Heart left ventricle (tissue), 16 donors: ENCODE measurements at regions of chr16 and their contacts with region 1.

Region 1: DNA sequence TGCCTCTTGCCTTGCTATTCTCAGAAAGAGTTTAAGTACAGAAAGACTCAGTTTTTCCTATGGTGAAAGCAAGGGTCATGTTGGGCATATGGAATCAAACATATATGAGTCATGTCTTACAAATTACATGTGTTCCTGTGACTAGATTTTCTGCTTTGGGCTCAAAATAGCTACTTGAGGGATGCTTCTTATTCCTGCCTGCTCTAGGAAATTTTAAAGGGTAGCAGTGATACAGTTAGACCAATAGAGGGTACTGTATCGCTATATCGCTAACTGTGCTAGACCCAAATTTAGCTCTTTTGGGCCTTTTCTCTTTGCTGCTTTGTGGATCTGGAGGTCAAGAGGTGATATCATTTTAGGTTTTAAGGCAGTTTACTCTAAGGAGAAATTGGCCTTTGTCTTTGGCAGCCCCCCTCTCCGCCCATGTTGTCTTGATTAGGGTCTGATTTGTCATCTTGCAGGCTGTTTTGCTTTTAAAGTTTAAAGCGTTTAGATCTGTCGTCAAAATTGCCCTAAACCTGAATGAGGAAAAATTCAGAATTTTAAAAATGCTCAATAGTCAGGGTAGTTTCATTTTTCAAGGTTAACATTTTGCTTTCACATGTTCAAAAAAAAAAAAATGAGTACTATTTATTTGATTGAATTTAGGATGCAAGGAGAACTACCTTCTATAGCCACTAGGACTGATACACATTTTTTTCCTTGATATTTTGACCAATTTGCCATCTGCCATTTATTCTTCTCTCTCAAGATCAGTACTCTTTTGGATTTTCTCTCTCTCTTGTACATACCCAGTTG is 8.8 kb downstream of the NFATC3 start:
- DNase-seq: no peak
- ATAC-seq: peak; percentile 56 to 73 (median 63)
- H3K4me3 ChIP-seq: no peak overlapping the region
- H3K27ac ChIP-seq: peak overlapping the region in 1 of 12 donors; percentile 13
- H3K4me1 ChIP-seq: peaks cover 0 to 71% (median 43%) of the 10 kb centered on the region in 12 donors
- H3K27me3 ChIP-seq: no peaks in the 10 kb centered on the region
- CTCF ChIP-seq: peak; percentile 12 to 64 (median 41)
- POLR2A ChIP-seq: no peak

Region 2: GRCh38 chr16:68031951-68032350 is 62.1 kb before region 1 on chr16:
- intact Hi-C with region 1: no loop called
- DNase-seq: no peak
- ATAC-seq: no peak
- H3K4me3 ChIP-seq: no peak overlapping the region
- H3K27ac ChIP-seq: no peak overlapping the region
- H3K4me1 ChIP-seq: no peaks in the 10 kb centered on the region
- H3K27me3 ChIP-seq: no peaks in the 10 kb centered on the region
- CTCF ChIP-seq: no peak
- POLR2A ChIP-seq: no peak

Region 3: GRCh38 chr16:68200088-68200783 is 106.2 kb after region 1 on chr16:
- intact Hi-C with region 1: loop called in 1 of 10 experiments (anchors 5 kb)
- DNase-seq: no peak
- ATAC-seq: no peak
- H3K4me3 ChIP-seq: no peak overlapping the region
- H3K27ac ChIP-seq: no peak overlapping the region
- H3K4me1 ChIP-seq: peaks cover 0 to 12% (median 2%) of the 10 kb centered on the region in 12 donors
- H3K27me3 ChIP-seq: no peaks in the 10 kb centered on the region
- CTCF ChIP-seq: no peak
- POLR2A ChIP-seq: no peak

Region 4: DNA sequence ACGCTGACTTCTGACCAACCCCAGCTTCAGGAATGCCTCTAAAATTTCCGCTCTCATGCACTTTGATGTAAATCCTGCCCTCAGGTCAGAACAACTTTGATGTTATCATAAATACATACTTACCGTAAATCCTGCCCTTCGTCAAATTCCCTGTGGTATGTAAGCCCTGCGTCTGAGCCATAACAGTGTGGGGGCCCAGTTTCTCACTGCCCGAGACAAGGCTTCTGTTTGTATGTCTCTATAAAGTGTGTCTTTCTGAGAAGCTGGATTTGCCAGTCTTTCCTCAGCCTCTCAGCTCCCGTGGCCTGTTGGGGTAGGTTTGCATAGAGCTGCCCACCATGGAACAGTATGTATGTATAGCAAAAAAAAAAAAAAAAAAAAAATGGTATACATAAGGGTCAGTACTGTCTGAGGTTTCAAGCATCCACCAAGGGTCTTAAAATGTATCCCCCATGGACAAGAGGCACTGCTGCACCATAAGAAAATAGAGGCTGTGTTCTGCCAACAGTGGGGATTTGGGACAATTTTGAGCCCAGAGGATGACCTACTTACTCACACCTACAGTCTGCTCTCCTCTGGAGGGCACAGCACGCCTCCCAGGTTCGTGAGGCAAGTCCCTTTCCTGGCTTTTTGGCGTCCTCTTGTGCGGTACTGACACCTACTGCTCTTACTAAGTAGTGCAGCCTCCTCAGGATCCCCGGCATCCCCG is 234.3 kb after region 1 on chr16:
- intact Hi-C with region 1: loop called in 3 of 10 experiments (anchors 10 kb)
- DNase-seq: peak; percentile 76 to 84 (median 81)
- ATAC-seq: peak; percentile 85 to 95 (median 94)
- H3K4me3 ChIP-seq: no peak overlapping the region
- H3K27ac ChIP-seq: no peak overlapping the region
- H3K4me1 ChIP-seq: peaks cover 0 to 27% (median 7%) of the 10 kb centered on the region in 12 donors
- H3K27me3 ChIP-seq: no peaks in the 10 kb centered on the region
- CTCF ChIP-seq: peak; percentile 85 to 97 (median 92)
- POLR2A ChIP-seq: no peak